Mammary epithelial cell (primary cell): ENCODE measurements at regions of chr16 and their contacts with region 1.

Region 1: DNA sequence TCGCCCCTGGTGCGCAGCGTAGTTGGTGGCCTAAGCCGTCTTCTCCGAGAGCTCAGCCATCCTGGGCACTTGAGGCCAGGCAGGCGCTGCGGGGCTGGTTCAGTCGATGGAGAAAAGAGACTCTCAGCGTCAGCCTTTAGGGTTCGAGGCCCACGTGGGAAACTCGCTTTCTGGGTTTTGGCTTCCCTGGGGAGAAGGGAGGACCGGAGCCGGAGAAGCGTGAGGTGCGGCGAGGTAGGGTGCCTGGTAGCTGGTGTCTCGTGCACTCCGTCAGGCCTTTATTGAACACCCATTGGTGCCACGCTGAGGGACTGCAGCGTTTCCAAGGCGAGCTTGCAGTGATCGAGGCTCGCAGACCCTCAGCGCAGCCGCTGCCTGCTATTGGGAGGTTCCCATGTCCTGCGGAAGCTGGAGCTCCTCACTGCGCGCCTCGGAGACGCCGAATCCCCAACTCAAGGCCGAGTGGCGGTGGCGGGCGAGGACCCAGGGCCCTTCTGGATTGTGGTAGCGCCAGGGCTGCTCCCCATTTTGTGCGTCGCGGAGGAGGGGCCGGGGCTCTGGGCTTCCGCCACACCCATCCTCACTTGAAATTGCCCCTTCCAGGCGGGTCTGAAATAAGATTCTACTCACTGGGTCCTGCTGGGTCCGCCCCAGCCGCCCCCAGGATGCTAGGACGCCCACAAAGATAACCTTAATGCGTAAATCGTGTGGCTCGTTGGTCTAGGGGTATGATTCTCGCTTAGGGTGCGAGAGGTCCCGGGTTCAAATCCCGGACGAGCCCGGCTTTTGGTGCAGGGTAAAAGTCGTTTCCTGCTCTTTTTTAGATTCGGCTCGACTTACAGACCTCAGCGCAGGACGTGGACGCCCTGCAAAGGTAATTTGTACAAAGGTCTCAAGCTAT is 1.2 kb downstream of the OR1F1 start:
- DNase-seq: peak; percentile 76
- H3K4me3 ChIP-seq: peak overlapping the region; percentile 57 to 62 (median 60)
- H3K27ac ChIP-seq: no peak overlapping the region
- H3K4me1 ChIP-seq: peaks cover 8% of the 10 kb centered on the region
- H3K27me3 ChIP-seq: no peaks in the 10 kb centered on the region
- CTCF ChIP-seq: no peak

Region 2: GRCh38 chr16:3150346-3151218 is 38.6 kb before region 1 on chr16:
- CTCF ChIA-PET with region 1: no interaction called
- dilution Hi-C with region 1: no loop called
- in situ Hi-C with region 1: no loop called
- intact Hi-C with region 1: loop called (anchors 2 kb)
- DNase-seq: peak; percentile 96
- H3K4me3 ChIP-seq: peak overlapping the region; percentile 62 to 70 (median 70)
- H3K27ac ChIP-seq: peak overlapping the region; percentile 70
- H3K4me1 ChIP-seq: peaks cover 14% of the 10 kb centered on the region
- H3K27me3 ChIP-seq: no peaks in the 10 kb centered on the region
- CTCF ChIP-seq: no peak

Region 3: GRCh38 chr16:3171855-3172593 is 17.2 kb before region 1 on chr16:
- CTCF ChIA-PET with region 1: no interaction called
- dilution Hi-C with region 1: no loop called
- in situ Hi-C with region 1: no loop called
- intact Hi-C with region 1: loop called (anchors 1 kb)
- DNase-seq: peak; percentile 84
- H3K4me3 ChIP-seq: peak overlapping the region in 1 of 3 experiments; percentile 21
- H3K27ac ChIP-seq: no peak overlapping the region
- H3K4me1 ChIP-seq: peaks cover 16% of the 10 kb centered on the region
- H3K27me3 ChIP-seq: peaks cover 2% of the 10 kb centered on the region
- CTCF ChIP-seq: no peak

Region 4: DNA sequence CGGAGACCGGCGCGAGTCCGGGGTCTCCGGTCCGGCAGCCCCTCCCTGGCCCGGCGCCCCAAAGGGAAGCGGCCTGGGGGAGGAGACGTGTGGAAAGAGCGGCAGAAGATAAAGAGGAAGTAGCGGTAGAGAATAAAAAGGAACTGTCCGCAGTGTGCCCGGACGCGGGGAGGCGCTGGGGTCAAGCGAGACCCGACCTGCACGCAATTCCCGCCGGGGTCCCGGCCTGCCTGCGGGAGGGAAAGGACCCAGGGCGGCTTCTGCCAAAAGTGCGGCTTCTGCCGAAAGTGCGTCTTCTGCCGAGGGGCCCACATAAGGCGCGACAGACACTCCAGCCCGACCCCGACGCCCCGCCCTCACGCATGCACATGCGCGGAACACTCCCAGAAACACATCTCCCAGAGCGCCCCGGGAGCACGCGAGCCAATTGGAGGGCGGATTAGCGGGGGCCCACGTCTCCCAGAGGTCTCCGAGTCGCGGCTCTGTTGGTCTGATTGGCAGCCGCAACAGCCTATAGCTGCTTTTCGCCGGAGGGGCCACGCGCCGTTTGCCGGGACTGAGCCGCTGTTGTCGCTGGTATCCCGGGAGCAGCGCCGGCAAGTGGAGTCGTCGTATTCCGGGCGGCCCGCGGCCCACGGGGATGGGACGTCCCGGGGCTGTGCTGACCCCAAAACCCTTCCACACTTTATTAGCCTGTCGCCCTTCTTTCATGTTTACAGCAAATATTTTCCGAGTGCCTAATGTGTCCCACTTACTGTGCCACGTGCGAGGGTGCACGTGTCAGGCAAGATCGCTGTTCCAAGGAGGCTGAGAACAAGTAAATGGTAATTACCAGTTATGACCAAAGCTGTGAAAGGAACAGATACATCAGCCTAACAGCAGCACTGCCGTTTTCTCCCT is 75.2 kb after region 1 on chr16:
- CTCF ChIA-PET with region 1: no interaction called
- dilution Hi-C with region 1: no loop called
- in situ Hi-C with region 1: no loop called
- intact Hi-C with region 1: loop called (anchors 2 kb)
- DNase-seq: peak; percentile 98
- H3K4me3 ChIP-seq: peak overlapping the region; percentile 74 to 82 (median 77)
- H3K27ac ChIP-seq: peak overlapping the region; percentile 49
- H3K4me1 ChIP-seq: peaks cover 7% of the 10 kb centered on the region
- H3K27me3 ChIP-seq: no peaks in the 10 kb centered on the region
- CTCF ChIP-seq: peak; percentile 7 to 34

Region 5: DNA sequence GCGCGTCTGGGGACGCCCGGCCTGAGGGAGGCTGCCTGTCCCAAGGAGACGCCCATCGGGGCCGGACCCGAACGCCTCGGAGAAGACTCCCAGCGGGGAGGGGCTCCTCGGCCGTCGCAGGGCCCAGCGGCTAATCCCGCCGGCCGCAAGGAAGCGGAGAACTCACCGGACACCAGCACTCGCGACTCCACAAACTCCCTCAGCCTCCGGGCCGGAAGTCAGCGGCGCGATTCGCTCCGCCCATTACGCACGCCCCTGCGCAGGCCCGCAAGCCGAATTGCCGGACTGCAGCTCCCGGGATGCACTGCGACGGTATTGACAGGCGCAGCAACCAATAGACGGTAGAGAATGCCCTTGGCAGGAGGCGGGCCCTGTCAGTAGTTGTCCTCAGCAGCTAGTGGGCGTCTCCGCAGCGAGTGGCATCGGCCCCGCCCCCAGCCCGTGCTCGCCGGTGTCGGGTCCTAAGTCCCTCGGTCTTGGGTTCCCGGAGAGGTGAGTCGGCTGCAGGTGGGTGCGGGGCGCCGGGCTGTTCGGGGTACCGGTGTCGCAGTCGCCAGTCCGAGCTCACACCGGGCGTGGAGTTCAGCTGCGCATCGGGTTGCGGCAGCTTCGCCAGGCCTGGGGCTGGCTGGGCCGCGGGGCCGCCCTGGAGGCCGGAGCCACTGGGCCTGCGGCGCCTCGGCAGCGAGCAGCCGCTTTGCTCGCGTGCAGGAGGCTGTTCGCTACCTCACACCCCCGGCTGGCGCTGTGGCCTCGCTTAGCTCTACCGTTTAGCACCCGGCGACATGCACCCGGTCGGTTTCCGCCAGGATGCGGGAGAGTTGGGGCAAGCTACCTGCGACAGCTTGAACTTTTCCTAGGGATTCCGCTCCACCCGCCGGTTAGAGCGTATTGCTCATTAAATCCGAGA is 211.9 kb after region 1 on chr16 and contains the starts of genes ZNF174 and ZSCAN32:
- CTCF ChIA-PET with region 1: no interaction called
- dilution Hi-C with region 1: no loop called
- in situ Hi-C with region 1: no loop called
- intact Hi-C with region 1: loop called (anchors 2 kb)
- DNase-seq: peak; percentile 99
- H3K4me3 ChIP-seq: peak within 1 kb of the TSS; percentile 61 to 88 (median 79)
- H3K27ac ChIP-seq: peak within 1 kb of the TSS; percentile 60
- H3K4me1 ChIP-seq: peaks cover 14% of the 10 kb centered on the region
- H3K27me3 ChIP-seq: no peaks in the 10 kb centered on the region
- CTCF ChIP-seq: peak in 1 of 2 donors; percentile 6
- total RNA-seq, gene ZNF174: 5.3 to 7.7 TPM
- total RNA-seq, gene ZSCAN32: 13.1 to 15.8 TPM

Region 6: GRCh38 chr16:3503523-3503922 is 314.3 kb after region 1 on chr16:
- CTCF ChIA-PET with region 1: no interaction called
- dilution Hi-C with region 1: no loop called
- in situ Hi-C with region 1: no loop called
- intact Hi-C with region 1: loop called (anchors 2 kb)
- DNase-seq: peak; percentile 62
- H3K4me3 ChIP-seq: no peak overlapping the region
- H3K27ac ChIP-seq: peak overlapping the region; percentile 65
- H3K4me1 ChIP-seq: peaks cover 18% of the 10 kb centered on the region
- H3K27me3 ChIP-seq: no peaks in the 10 kb centered on the region
- CTCF ChIP-seq: no peak